PC-9 (cell line): ENCODE measurements at regions of chr9 and their contacts with region 1.

Region 1: DNA sequence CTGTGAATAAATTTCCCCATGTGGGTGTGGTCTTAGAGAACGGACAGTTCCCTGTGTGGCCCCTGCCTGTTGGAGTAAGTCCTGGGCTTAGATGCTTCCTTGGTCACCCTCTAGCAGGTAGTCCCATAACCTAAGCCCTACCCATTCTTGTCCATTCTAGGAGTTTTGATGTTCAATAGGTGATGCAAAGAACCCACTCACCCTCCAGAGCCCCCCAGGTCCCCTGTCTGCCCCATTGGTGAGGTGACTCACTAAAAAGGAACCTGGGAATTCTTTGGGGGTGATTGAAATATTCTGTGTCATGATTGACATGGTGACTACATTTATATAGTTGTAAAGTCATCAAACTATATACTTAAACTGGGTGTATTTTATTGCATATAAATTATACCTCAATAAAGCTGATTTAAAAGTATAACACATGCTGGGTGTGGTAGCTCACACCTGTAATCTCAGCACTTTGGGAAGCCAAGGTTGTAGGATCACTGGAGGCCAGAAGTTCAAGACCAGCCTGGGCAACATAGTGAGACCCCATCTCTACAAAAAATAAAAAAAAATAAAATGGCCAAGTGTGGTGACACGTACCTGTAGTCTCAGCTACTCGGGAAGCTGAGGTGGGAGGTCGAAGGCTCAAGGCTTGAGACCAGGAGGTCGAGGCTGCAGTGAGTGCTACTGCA is 20.8 kb upstream of the GTF3C5 start:
- DNase-seq: no peak
- H3K4me3 ChIP-seq: no peak overlapping the region
- H3K27ac ChIP-seq: no peak overlapping the region
- H3K4me1 ChIP-seq: no peaks in the 10 kb centered on the region
- H3K27me3 ChIP-seq: peaks cover 86% of the 10 kb centered on the region
- CTCF ChIP-seq: no peak

Region 2: GRCh38 chr9:133075925-133076630 is 66.0 kb after region 1 on chr9:
- CTCF ChIA-PET with region 1: interaction called, 12 read pairs
- POLR2A ChIA-PET with region 1: no interaction called
- intact Hi-C with region 1: no loop called
- DNase-seq: peak in 1 of 2 experiments; percentile 43
- H3K4me3 ChIP-seq: no peak overlapping the region
- H3K27ac ChIP-seq: no peak overlapping the region
- H3K4me1 ChIP-seq: no peaks in the 10 kb centered on the region
- H3K27me3 ChIP-seq: peaks cover 53% of the 10 kb centered on the region
- CTCF ChIP-seq: no peak